Activated naive CD8-positive, alpha-beta T cell treated with anti-CD3 and anti-CD28 coated beads, Interleukin-2, amount 10 ng/mL, durations not matched to agents 7 days and 5 days (primary cell): ENCODE measurements at regions of chr12 and their contacts with region 1.

Region 1: GRCh38 chr12:111841750-111842555 is at the start of gene MAPKAPK5:
- DNase-seq: peak; percentile 99
- ATAC-seq: peak; percentile 83
- H3K4me3 Mint-ChIP-seq: peak within 1 kb of the TSS; percentile 95
- H3K27ac Mint-ChIP-seq: peak within 1 kb of the TSS; percentile 98
- H3K4me1 Mint-ChIP-seq: peaks cover 32% of the 10 kb centered on the region
- H3K27me3 Mint-ChIP-seq: no peaks in the 10 kb centered on the region
- total RNA-seq, gene MAPKAPK5: 52.5 to 63.7 TPM

Region 2: DNA sequence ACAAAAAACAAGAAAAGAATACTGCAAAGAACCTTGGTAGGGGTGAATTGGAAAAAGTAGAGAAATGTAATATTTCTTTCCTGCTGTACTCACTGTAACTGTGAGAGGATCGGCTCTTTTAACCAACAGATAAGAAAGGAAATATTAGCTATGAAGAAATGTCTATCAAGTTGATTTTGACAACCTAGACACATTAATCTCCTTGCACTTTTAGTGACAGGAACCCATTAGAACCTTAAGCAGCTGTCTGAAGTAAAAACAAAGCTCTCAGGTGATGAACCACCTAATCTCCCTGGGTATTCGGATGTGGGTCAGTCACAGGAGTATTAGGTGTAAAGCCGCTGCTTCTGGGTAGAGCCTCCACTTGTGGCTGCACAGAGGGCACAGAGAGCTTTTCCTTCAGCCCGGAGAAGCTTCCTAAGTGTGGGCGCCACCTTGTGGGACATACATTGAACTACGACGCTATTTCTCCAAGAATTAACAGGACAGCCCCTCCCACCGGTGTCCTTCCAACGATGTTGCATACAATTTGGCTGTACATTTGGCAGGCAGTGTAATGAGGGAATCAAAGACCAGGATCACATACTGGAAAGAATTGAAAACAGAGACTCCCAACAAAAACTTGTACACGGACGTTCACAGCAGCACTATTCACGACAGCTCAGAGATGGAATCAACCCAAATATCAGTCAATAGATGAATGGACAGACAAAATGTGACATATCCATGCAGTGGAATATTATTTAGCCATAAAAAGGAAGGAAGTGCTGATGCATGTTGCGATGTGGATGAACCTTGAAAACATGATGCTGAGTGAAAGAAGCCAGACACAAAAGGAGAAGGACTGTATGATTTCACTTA is 28.8 kb before region 1 on chr12:
- POLR2A ChIA-PET with region 1: interaction called, 10 read pairs
- DNase-seq: peak; percentile 61
- ATAC-seq: peak; percentile 97
- H3K4me3 Mint-ChIP-seq: no peak overlapping the region
- H3K27ac Mint-ChIP-seq: no peak overlapping the region
- H3K4me1 Mint-ChIP-seq: peaks cover 7% of the 10 kb centered on the region
- H3K27me3 Mint-ChIP-seq: peaks cover 3% of the 10 kb centered on the region

Region 3: GRCh38 chr12:111927346-111927745 is 85.4 kb after region 1 on chr12:
- POLR2A ChIA-PET with region 1: no interaction called
- DNase-seq: no peak
- ATAC-seq: no peak
- H3K4me3 Mint-ChIP-seq: no peak overlapping the region
- H3K27ac Mint-ChIP-seq: no peak overlapping the region
- H3K4me1 Mint-ChIP-seq: no peaks in the 10 kb centered on the region
- H3K27me3 Mint-ChIP-seq: no peaks in the 10 kb centered on the region